Activated B cell treated with CpG ODN at 0.5 μM for 24 hours (primary cell): ENCODE measurements at regions of chr12 and their contacts with region 1.

Region 1: GRCh38 chr12:53180220-53180930 is at the starts of genes CSAD and ZNF740:
- DNase-seq: peak; percentile 91
- ATAC-seq: peak; percentile 94
- H3K4me3 Mint-ChIP-seq: peak within 1 kb of the TSS; percentile 93
- H3K27ac Mint-ChIP-seq: peak within 1 kb of the TSS; percentile 98
- H3K4me1 Mint-ChIP-seq: peaks cover 53% of the 10 kb centered on the region
- H3K27me3 Mint-ChIP-seq: no peaks in the 10 kb centered on the region
- CTCF ChIP-seq: no peak
- total RNA-seq, gene CSAD: 25.7 and 34.6 TPM in 2 replicates
- total RNA-seq, gene ZNF740: 64.4 and 67.2 TPM in 2 replicates

Region 2: GRCh38 chr12:53054112-53054833 is 126.1 kb before region 1 on chr12:
- CTCF ChIA-PET with region 1: no interaction called
- POLR2A ChIA-PET with region 1: interaction called, 4 read pairs
- intact Hi-C with region 1: loop called (anchors 5 kb)
- DNase-seq: peak; percentile 86
- ATAC-seq: peak; percentile 97
- H3K4me3 Mint-ChIP-seq: peak overlapping the region; percentile 95
- H3K27ac Mint-ChIP-seq: peak overlapping the region; percentile 90
- H3K4me1 Mint-ChIP-seq: peaks cover 12% of the 10 kb centered on the region
- H3K27me3 Mint-ChIP-seq: peaks cover 6% of the 10 kb centered on the region
- CTCF ChIP-seq: no peak

Region 3: GRCh38 chr12:53200458-53201176 is 20.2 kb after region 1 on chr12:
- CTCF ChIA-PET with region 1: interaction called, 16 read pairs
- POLR2A ChIA-PET with region 1: interaction called, 66 read pairs
- intact Hi-C with region 1: loop called (anchors 1 kb)
- DNase-seq: no peak
- ATAC-seq: peak; percentile 65
- H3K4me3 Mint-ChIP-seq: peak overlapping the region; percentile 64
- H3K27ac Mint-ChIP-seq: peak overlapping the region; percentile 86
- H3K4me1 Mint-ChIP-seq: peaks cover 81% of the 10 kb centered on the region
- H3K27me3 Mint-ChIP-seq: no peaks in the 10 kb centered on the region
- CTCF ChIP-seq: no peak

Region 4: DNA sequence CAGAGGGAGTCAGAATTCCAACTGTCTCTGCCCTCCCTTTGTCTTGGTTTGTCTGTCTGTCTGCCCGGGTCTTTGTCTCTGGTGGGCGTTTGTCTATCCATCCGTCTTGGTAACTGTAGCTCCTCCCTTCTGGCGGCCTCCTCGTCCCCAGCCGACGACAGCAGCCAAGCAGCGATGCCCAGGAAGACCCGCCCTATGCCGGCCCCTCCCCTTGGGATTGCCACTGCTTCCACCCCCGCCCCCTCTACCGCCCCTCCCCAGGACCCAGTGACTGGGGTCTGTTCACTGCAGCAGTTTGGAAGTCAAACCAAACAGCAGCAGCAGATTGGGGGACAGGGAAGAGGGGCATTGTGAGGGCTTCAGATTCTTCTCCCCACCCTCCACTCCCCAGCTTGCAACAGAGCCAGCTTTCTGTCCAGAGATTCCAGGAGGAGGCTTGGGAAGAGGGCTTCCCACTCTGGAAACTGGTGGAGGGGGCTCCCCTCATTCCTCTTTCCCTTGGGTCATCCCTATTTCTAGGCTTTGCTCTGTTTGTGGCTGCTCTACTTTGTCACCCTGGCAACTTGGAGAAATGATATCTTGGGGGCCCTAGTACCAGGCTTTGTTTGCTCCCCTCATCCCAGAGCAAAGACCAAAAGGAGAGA is 54.0 kb after region 1 on chr12:
- CTCF ChIA-PET with region 1: no interaction called
- POLR2A ChIA-PET with region 1: no interaction called
- intact Hi-C with region 1: no loop called
- DNase-seq: no peak
- ATAC-seq: no peak
- H3K4me3 Mint-ChIP-seq: no peak overlapping the region
- H3K27ac Mint-ChIP-seq: no peak overlapping the region
- H3K4me1 Mint-ChIP-seq: peaks cover 41% of the 10 kb centered on the region
- H3K27me3 Mint-ChIP-seq: peaks cover 2% of the 10 kb centered on the region
- CTCF ChIP-seq: no peak

Region 5: DNA sequence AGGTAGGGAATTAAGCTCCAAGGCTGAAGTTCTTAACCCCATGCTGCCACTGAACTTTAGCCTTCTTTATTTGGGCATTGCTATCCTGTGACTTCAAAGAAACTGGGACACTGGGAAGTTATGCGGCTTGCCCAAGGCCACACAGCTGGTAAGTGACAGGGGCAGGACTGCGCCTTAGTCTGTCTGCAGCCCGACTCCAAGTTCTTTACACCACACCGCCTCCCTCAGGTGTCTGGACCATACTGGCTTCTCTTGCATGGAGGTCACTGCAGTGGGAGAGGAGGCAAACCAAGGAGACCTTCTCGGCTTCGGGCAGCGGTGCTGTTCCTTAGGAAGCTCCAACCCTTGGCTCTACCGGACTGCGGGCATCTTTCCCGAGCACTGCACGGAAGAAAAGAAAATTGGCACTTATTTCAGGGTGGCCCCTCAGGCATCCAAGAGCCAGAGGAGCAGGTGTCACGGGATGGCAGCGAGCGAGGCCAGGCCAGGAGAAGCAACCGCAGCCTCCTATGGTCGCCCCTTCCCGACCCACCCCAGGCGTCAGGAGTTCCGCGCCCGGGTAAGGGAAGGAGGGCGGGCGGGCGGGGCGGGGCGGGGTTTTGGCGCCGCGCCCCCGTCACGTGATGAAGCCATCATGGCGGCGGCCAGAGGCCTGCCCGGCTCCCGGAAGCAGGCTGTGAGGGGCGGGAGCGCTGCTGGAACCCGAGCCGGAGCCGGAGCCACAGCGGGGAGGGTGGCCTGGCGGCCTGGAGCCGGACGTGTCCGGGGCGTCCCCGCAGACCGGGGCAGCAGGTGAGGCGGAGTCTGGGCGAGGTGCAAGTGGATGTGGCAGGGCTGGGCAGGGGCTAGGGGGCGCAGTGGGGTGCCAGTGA is 71.3 kb after region 1 on chr12:
- CTCF ChIA-PET with region 1: no interaction called
- POLR2A ChIA-PET with region 1: interaction called, 7 read pairs
- intact Hi-C with region 1: loop called (anchors 2 kb)
- DNase-seq: peak; percentile 77
- ATAC-seq: peak; percentile 76
- H3K4me3 Mint-ChIP-seq: peak overlapping the region; percentile 98
- H3K27ac Mint-ChIP-seq: peak overlapping the region; percentile 90
- H3K4me1 Mint-ChIP-seq: peaks cover 49% of the 10 kb centered on the region
- H3K27me3 Mint-ChIP-seq: no peaks in the 10 kb centered on the region
- CTCF ChIP-seq: no peak

Region 6: GRCh38 chr12:53379389-53380103 is 199.2 kb after region 1 on chr12:
- CTCF ChIA-PET with region 1: no interaction called
- POLR2A ChIA-PET with region 1: interaction called, 5 read pairs
- intact Hi-C with region 1: loop called (anchors 1 kb)
- DNase-seq: peak; percentile 70
- ATAC-seq: peak; percentile 72
- H3K4me3 Mint-ChIP-seq: no peak overlapping the region
- H3K27ac Mint-ChIP-seq: no peak overlapping the region
- H3K4me1 Mint-ChIP-seq: peaks cover 37% of the 10 kb centered on the region
- H3K27me3 Mint-ChIP-seq: no peaks in the 10 kb centered on the region
- CTCF ChIP-seq: no peak